Activated B cell treated with CpG ODN at 0.5 μM for 24 hours (primary cell): ENCODE measurements at regions of chr1 and their contacts with region 1.

Region 1: DNA sequence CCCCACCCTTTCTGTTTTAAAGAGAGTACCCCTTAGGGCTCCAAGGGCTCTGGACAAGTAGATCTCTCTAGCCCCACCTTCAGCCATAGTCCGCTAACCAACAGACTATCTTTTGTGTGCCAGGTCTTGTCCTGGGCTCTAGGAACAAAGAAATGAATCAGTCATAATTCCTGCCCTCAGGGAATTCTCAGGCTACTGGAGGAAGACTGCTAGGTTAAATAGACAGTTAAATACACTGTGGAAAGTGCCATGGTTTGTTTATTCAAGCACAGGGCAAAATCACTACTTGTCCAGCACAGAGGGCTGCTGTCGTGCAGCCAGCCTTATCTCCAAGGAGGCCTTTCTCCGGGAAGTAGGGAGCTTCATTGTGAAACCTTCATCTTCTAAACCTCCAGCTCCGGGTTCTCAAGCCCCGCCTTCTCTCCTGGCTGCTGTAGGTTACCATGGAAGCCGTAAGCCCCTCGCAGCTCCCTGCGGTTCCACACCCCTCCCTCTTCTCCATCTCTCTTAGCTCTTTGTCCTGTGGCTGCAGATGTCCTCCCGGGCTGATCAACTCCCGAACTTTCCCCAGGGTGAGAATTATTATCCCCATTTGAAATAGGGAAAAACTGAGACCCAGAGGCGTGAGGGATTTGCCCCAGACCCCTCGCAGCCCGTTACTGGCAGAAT is 29.8 kb downstream of the SHISAL2A start:
- DNase-seq: no peak
- ATAC-seq: no peak
- H3K4me3 Mint-ChIP-seq: no peak overlapping the region
- H3K27ac Mint-ChIP-seq: peak overlapping the region; percentile 61
- H3K4me1 Mint-ChIP-seq: peaks cover 26% of the 10 kb centered on the region
- H3K27me3 Mint-ChIP-seq: no peaks in the 10 kb centered on the region
- CTCF ChIP-seq: no peak

Region 2: GRCh38 chr1:52127181-52128180 is 535.3 kb before region 1 on chr1:
- CTCF ChIA-PET with region 1: no interaction called
- POLR2A ChIA-PET with region 1: no interaction called
- intact Hi-C with region 1: loop called (anchors 5 kb)
- DNase-seq: no peak
- ATAC-seq: no peak
- H3K4me3 Mint-ChIP-seq: no peak overlapping the region
- H3K27ac Mint-ChIP-seq: no peak overlapping the region
- H3K4me1 Mint-ChIP-seq: peaks cover 4% of the 10 kb centered on the region
- H3K27me3 Mint-ChIP-seq: peaks cover 23% of the 10 kb centered on the region
- CTCF ChIP-seq: no peak

Region 3: GRCh38 chr1:52424231-52424636 is 238.5 kb before region 1 on chr1:
- CTCF ChIA-PET with region 1: no interaction called
- POLR2A ChIA-PET with region 1: no interaction called
- intact Hi-C with region 1: loop called (anchors 5 kb)
- DNase-seq: no peak
- ATAC-seq: peak; percentile 73
- H3K4me3 Mint-ChIP-seq: no peak overlapping the region
- H3K27ac Mint-ChIP-seq: peak overlapping the region; percentile 66
- H3K4me1 Mint-ChIP-seq: peaks cover 14% of the 10 kb centered on the region
- H3K27me3 Mint-ChIP-seq: no peaks in the 10 kb centered on the region
- CTCF ChIP-seq: no peak

Region 4: DNA sequence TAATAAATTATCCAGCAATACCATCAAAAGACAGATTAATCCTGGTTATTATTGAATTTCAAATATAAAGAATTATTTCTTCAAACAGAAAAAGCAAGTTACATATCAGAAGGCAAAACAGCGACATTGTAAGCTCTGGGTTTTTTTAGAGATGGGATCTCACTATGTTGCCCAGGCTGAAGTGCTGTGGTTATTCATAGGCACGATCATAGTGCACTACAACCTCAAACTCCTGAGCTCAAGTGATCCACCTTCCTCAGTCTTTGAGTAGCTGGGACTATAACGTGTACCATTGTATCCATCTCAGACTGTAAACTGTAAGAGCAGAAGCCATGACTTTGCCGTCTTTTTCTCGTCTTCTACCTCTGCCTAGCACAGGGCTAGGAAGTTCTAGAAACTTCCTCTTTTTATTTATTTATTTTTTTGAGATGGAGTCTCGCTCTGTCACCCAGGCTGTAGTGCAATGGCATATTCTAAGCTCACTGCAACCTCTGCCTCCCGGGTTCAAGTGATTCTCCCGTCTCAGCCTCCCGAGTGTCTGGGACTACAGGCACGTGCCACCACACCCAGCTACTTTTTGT is 80.6 kb before region 1 on chr1:
- CTCF ChIA-PET with region 1: no interaction called
- POLR2A ChIA-PET with region 1: no interaction called
- intact Hi-C with region 1: loop called (anchors 5 kb)
- DNase-seq: no peak
- ATAC-seq: no peak
- H3K4me3 Mint-ChIP-seq: no peak overlapping the region
- H3K27ac Mint-ChIP-seq: no peak overlapping the region
- H3K4me1 Mint-ChIP-seq: peaks cover 7% of the 10 kb centered on the region
- H3K27me3 Mint-ChIP-seq: no peaks in the 10 kb centered on the region
- CTCF ChIP-seq: no peak

Region 5: GRCh38 chr1:52601991-52602855 is 60.6 kb before region 1 on chr1 and contains the start of gene GPX7:
- CTCF ChIA-PET with region 1: interaction called, 4 read pairs
- POLR2A ChIA-PET with region 1: interaction called, 6 read pairs
- intact Hi-C with region 1: loop called (anchors 2 kb)
- DNase-seq: peak; percentile 57
- ATAC-seq: peak; percentile 75
- H3K4me3 Mint-ChIP-seq: peak within 1 kb of the TSS; percentile 84
- H3K27ac Mint-ChIP-seq: peak within 1 kb of the TSS; percentile 84
- H3K4me1 Mint-ChIP-seq: peaks cover 55% of the 10 kb centered on the region
- H3K27me3 Mint-ChIP-seq: no peaks in the 10 kb centered on the region
- CTCF ChIP-seq: no peak
- total RNA-seq, gene GPX7: 20.9 and 22.4 TPM in 2 replicates

Region 6: GRCh38 chr1:52645261-52645660 is 17.5 kb before region 1 on chr1:
- CTCF ChIA-PET with region 1: interaction called, 8 read pairs
- POLR2A ChIA-PET with region 1: interaction called, 26 read pairs
- intact Hi-C with region 1: no loop called
- DNase-seq: no peak
- ATAC-seq: no peak
- H3K4me3 Mint-ChIP-seq: no peak overlapping the region
- H3K27ac Mint-ChIP-seq: peak overlapping the region; percentile 41
- H3K4me1 Mint-ChIP-seq: peaks cover 53% of the 10 kb centered on the region
- H3K27me3 Mint-ChIP-seq: no peaks in the 10 kb centered on the region
- CTCF ChIP-seq: no peak

Region 7: DNA sequence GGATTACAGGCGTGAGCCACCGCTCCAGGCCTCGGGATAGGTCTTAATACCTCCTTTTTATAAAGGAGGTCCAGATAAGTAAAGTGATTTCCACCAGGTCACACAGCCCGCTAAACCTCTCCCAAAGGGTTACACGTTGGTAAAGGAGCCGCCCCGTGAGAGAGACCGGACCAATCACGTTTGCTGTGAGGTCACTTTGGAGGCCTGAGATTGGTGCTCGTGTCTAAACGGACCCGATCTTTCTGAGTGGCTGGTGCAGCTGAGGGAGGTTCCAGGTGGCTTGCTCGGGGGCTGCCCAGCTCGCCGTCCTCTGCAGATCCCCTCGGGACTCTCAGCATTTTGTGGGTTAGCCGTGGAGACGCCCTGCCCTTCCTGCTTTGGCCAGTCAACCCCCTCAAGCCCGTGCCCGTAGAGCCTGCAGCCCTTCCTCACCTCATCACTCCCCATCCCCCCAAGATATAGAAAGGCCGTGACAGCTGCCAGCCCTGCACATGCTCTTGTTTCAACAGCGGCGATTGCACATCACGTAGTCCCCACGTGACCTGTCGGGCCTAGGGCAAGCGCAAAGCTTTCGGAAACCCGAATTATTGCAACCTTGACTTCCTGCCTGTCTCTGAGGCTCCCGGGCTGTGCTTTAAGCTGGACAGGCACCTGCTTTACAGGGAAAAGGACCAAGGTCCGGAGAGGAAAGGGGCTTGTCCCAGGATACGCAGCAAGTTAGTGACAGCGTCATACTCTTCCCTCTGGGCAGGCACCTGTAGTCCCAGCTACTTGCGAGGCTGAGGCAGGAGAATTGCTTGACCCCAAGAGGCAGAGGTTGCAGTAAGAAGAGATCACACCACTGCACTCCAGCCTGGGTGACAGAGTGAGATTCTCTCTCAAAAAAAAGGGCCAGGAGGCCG is 40.4 kb after region 1 on chr1:
- CTCF ChIA-PET with region 1: no interaction called
- POLR2A ChIA-PET with region 1: no interaction called
- intact Hi-C with region 1: no loop called
- DNase-seq: peak; percentile 74
- ATAC-seq: peak; percentile 87
- H3K4me3 Mint-ChIP-seq: peak overlapping the region; percentile 87
- H3K27ac Mint-ChIP-seq: peak overlapping the region; percentile 98
- H3K4me1 Mint-ChIP-seq: peaks cover 26% of the 10 kb centered on the region
- H3K27me3 Mint-ChIP-seq: peaks cover 2% of the 10 kb centered on the region
- CTCF ChIP-seq: no peak